Vagina (tissue), 2 donors: ENCODE measurements at regions of chr17 and their contacts with region 1.

Region 1: DNA sequence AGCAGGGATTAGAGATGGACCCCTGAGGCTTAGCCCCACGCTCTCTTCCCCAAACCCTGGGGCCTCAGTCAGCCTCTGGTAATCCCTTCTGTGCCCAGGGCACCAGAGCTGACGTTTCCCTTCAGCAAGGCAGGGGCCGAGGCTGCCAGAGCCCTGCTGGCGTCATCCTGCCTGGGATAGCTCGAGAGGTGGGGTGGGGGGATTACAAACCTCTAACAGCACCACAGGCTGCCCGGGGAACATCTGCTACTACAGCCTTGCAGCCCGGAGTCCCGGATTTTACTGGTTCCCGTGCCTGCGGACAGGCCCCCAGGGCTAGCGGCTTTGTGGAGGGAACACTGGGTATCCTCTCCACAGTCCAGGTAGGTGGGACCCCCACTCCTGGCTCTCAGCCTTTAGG is at the start of gene AANAT:
- DNase-seq: no peak
- H3K4me3 ChIP-seq: no peak within 1 kb of the TSS
- H3K27ac ChIP-seq: no peak within 1 kb of the TSS
- H3K4me1 ChIP-seq: no peaks in the 10 kb centered on the region
- H3K27me3 ChIP-seq: no peaks in the 10 kb centered on the region
- CTCF ChIP-seq: no peak
- POLR2A ChIP-seq: no peak
- total RNA-seq, gene AANAT: not detected

Region 2: DNA sequence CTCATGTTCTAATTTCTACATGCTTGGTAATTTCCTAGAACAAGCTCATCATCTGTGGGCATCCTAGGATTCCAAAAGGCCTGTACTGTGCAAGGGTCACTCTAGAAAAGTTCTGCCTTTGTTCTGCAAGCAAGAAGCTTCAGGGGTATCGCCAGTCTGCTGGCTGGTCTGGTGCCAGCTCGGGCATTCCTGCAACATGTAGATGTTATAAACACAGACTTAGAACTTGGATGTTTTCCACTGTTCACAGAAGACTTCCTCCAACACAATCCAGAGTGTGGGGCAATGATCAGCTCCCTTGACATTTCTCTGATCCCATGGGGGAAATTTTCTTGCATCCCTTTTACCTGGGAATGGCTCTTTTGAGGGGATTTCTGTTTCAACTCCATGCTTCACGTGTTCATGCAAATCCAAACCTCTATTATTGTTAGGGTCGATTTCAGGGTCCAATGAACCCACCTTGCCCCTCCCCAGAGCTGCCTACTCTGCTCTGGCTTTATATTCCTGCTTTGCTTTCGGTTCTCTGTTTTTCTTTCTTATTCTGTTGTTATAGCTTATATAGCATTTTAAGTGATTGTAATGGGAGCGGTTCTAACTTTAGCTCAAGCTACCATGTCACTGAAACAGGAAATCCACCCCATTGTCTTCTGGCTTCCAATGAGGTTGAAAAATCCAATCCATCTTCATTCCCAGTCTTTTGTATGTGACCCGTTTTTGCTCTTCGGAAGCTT is 39.7 kb before region 1 on chr17:
- intact Hi-C with region 1: no loop called
- DNase-seq: no peak
- H3K4me3 ChIP-seq: no peak overlapping the region
- H3K27ac ChIP-seq: no peak overlapping the region
- H3K4me1 ChIP-seq: peaks cover 6% of the 10 kb centered on the region
- H3K27me3 ChIP-seq: no peaks in the 10 kb centered on the region
- CTCF ChIP-seq: no peak
- POLR2A ChIP-seq: no peak

Region 3: GRCh38 chr17:76527430-76528111 is 60.2 kb after region 1 on chr17:
- intact Hi-C with region 1: no loop called
- DNase-seq: no peak
- H3K4me3 ChIP-seq: peak overlapping the region in 1 of 2 donors; percentile 10
- H3K27ac ChIP-seq: peak overlapping the region; percentile 96
- H3K4me1 ChIP-seq: peaks cover 72% of the 10 kb centered on the region
- H3K27me3 ChIP-seq: no peaks in the 10 kb centered on the region
- CTCF ChIP-seq: peak in 1 of 3 experiments; percentile 38
- POLR2A ChIP-seq: no peak

Region 4: GRCh38 chr17:76540381-76541300 is 73.3 kb after region 1 on chr17:
- intact Hi-C with region 1: loop called (anchors 10 kb)
- DNase-seq: peak in 1 of 2 donors; percentile 96
- H3K4me3 ChIP-seq: peak overlapping the region; percentile 20 to 47
- H3K27ac ChIP-seq: peak overlapping the region; percentile 54
- H3K4me1 ChIP-seq: peaks cover 68% of the 10 kb centered on the region
- H3K27me3 ChIP-seq: no peaks in the 10 kb centered on the region
- CTCF ChIP-seq: no peak
- POLR2A ChIP-seq: peak in 1 of 2 donors; percentile 41